ENCODE measurements at regions of chr20 and their contacts with region 1.

Region 1: GRCh38 chr20:54062812-54063280 is 7.5 kb downstream of the BCAS1 start:
- DNase-seq: no peak
- H3K4me3 ChIP-seq: no peak overlapping the region
- CTCF ChIP-seq: peak; percentile 66

Region 2: DNA sequence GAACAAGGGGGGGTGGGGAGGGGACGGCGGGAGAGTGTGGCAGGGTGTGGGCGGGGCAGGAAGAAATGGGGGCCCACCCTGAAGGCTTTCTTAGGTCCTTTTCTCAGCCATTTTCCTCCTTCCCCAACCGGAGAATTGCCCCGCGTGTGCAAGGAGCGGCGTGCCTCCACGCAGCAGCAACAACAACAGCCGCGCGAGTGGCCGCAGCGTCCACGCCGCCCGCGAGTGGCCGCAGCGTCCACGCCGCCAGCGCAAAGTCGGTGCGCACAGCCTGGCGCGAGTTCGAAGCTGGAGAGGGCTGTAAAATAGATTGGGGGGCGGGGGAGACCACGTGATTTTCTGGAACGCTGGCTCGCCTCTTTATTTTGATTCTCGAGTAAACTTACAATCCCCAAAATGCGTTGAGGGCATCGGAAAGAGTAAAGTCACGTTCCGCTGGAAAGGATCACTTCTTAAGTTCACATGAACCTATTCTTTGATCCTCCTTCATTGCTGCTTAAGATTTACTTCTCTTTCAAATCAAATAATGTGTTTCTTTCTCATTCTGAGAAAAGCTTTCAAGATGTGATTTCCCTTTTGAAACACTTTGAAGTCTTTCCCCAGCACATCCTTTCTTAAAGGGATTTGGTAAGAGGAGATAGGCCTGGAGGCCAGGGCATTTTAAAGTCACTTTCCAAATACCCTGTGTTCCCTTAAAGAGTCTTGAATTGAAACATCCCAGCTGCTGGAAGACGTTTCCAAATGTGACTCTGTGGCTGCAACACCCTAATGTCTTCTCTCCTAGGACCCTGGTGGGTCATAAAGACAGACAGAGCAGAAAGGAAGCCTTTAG is 402.6 kb before region 1 on chr20:
- in situ Hi-C with region 1: loop called (anchors 10 kb)
- DNase-seq: no peak
- H3K4me3 ChIP-seq: no peak overlapping the region
- CTCF ChIP-seq: no peak

Region 3: DNA sequence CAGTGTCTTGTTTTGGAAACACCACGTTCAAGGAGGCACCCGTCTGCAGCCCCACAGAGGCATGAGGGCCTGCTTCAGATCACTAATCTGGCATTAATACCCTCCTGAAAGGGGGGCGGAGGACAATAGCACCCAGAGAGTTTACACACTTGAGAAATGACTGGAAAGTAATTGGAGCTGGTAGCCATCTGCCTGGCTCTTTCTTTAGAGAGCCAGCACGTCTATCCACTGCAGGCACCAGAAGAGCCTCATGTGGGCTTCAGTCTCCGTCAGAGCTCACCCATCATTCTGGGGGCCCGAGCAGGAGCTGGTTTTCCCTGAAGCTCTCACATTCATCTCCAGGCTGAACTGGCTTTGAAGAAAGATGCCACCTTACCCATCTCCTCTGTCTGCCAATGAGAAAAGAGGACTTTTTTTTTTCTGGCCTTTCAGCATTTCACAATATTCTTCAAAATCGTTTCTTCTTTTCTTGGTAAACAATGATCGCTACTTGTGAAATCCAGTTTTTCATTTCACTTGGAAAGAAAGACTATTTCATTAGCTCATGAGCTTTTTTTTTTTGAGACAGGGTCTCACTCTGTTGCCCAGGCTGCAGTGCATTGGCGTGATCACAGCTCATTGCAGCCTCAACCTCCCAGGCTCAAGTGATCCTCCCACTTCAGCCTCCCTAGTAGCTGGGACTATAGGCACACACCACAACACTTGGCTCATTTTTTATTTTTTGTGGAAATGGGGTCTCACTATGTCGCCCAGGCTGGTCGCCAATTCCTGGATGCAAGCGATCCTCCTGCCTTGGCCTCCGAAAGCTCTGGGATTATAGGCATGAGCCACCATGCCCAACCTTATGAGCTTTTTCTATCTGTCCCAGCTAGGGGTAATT is 344.5 kb before region 1 on chr20:
- in situ Hi-C with region 1: no loop called
- DNase-seq: no peak
- H3K4me3 ChIP-seq: no peak overlapping the region
- CTCF ChIP-seq: no peak

Region 4: DNA sequence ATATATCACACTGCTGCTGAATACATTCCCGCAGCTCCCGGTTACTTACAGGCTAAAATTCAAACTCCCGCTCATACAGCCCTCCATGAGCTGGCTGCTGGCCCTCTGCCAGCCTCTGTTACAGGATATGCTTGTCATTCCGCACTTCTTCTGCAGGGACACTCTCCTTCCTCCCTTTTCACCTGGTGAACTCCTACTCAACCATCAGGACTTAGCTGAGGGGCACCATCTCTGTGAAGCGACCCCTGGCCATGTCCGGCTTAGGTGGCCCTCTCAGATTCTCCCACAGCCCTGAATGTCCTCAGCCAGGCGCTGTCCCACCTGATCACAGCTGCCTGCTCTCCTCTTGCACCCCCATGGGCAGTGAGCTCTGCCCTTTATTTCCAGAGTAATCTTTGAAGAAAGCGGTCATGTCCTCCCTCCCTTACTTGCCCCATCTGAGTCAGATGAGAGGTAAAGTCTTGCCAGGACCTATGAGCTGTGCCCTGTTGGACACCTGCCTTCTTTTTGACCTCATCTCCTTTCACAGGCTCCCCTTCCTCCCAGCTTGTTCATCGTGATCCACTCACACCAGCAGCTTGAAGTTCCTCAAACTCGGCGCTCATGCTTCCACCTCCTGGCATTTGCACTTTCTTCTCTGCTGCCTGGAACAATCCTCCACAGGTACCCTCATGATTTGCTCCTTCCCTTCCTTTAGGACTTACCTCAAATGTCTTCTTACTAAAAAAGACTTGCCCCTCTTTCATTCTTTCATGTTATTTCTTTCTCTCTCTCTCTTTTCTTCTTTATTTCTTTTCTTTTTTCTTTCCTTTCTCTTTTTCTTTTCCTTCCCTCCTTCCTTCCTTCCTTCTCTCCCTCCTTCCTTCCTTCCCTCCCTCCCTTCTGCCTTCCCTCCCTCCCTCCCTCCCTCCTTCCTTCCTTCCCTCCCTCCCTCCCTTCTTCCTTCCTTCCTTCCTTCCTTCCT is 105.3 kb after region 1 on chr20:
- in situ Hi-C with region 1: no loop called
- DNase-seq: no peak
- H3K4me3 ChIP-seq: no peak overlapping the region
- CTCF ChIP-seq: no peak